ENCODE measurements at regions of chr20 and their contacts with region 1.

Region 1: DNA sequence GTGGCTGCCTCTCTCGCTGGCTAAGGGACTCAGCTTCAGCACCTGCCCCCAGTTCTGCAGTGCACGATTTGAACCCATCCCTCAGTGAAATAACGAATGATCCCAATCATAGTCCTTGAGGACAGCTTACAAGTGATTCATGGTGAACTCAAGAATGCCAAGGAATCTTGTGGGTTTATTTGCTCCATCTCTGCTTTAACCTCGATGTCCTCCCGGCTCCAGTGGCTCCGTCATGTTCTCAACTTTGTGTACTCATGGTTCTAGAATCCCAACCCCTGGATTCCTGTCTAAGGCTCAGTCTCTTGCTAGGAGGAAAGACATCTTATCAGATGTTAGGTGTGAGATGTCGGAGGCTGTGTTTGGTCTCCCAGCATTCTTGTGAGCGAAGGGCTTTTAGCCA is 29.0 kb upstream of the GTSF1L start:
- DNase-seq: no peak
- H3K4me3 ChIP-seq: no peak overlapping the region
- H3K27ac ChIP-seq: no peak overlapping the region
- H3K4me1 ChIP-seq: peaks cover 23% of the 10 kb centered on the region
- CTCF ChIP-seq: no peak

Region 2: DNA sequence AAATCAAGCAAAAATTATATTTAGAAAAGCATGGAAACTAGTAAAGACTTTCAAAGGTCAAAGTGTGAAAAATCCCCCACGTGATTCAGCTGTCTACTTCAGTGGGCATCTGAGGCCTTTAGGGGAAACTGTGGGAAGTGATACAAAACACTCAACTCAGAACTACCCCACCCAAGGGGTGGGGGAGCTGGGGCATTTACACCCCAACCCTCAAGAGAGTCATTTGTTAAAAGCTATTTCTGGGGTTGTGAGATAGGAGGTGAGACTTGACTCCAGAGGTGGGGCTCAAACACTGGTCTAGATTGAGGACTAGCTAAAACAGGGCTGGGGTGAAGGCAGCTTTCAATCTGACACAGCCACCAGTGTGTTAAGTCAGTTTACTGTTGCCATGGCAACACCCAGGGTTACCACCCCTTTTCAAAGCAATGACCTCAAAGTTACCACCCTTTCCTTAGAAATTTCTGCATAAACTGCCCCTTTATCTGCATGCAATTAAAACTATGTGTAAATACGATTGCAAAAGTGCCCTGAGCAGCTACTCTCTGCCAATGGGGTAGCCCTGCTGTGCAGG is 19.2 kb before region 1 on chr20:
- CTCF ChIA-PET with region 1: no interaction called
- POLR2A ChIA-PET with region 1: no interaction called
- intact Hi-C with region 1: no loop called
- DNase-seq: peak; percentile 51
- H3K4me3 ChIP-seq: no peak overlapping the region
- H3K27ac ChIP-seq: no peak overlapping the region
- H3K4me1 ChIP-seq: peaks cover 54% of the 10 kb centered on the region
- CTCF ChIP-seq: no peak

Region 3: DNA sequence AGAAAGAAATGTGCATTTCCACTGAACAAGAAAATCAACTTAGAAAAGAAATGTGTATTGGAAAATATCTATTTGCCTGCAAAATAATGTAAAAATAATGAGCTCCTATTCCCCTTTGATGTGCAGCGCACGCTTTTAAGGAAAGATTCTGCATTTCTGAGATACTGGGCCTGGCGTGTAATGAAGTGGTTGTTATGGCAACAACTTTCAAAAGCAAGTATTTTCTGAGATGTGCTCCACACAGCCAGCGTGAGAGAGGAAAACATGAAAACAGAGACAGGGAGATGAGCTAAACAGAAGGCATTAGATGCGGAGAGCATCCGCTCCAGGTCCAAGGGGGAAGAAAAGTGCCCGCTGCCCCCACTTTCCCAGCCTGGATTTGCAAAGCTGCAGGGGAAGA is 10.1 kb after region 1 on chr20:
- CTCF ChIA-PET with region 1: no interaction called
- POLR2A ChIA-PET with region 1: interaction called, 12 read pairs
- intact Hi-C with region 1: no loop called
- DNase-seq: no peak
- H3K4me3 ChIP-seq: no peak overlapping the region
- H3K27ac ChIP-seq: no peak overlapping the region
- H3K4me1 ChIP-seq: no peaks in the 10 kb centered on the region
- CTCF ChIP-seq: no peak

Measured in OCI-LY7 (cell line).